ENCODE measurements at regions of chr11 and their contacts with region 1.

Region 1: GRCh38 chr11:5992604-5993251 is 5.9 kb upstream of the OR52L1 start:
- DNase-seq: no peak
- H3K4me3 ChIP-seq: no peak overlapping the region
- H3K27ac ChIP-seq: no peak overlapping the region
- H3K4me1 ChIP-seq: no peaks in the 10 kb centered on the region
- H3K27me3 ChIP-seq: no peaks in the 10 kb centered on the region
- CTCF ChIP-seq: peak in 2 of 3 experiments; percentile 55 to 74; a peak in 3 of 4 replicates
- EP300 ChIP-seq: no peak
- POLR2A ChIP-seq: no peak
- RAD21 ChIP-seq: peak; percentile 55 to 63

Region 2: GRCh38 chr11:5955586-5955985 is 37.1 kb before region 1 on chr11:
- CTCF ChIA-PET with region 1: no interaction called
- POLR2A ChIA-PET with region 1: no interaction called
- DNase-seq: no peak
- H3K4me3 ChIP-seq: no peak overlapping the region
- H3K27ac ChIP-seq: no peak overlapping the region
- H3K4me1 ChIP-seq: no peaks in the 10 kb centered on the region
- H3K27me3 ChIP-seq: no peaks in the 10 kb centered on the region
- CTCF ChIP-seq: no peak
- EP300 ChIP-seq: no peak
- POLR2A ChIP-seq: no peak
- RAD21 ChIP-seq: no peak

Region 3: GRCh38 chr11:6006395-6006794 is 13.7 kb after region 1 on chr11:
- CTCF ChIA-PET with region 1: interaction called, 20 read pairs
- POLR2A ChIA-PET with region 1: no interaction called
- DNase-seq: no peak
- H3K4me3 ChIP-seq: no peak overlapping the region
- H3K27ac ChIP-seq: no peak overlapping the region
- H3K4me1 ChIP-seq: no peaks in the 10 kb centered on the region
- H3K27me3 ChIP-seq: no peaks in the 10 kb centered on the region
- CTCF ChIP-seq: no peak
- EP300 ChIP-seq: no peak
- POLR2A ChIP-seq: no peak
- RAD21 ChIP-seq: no peak

Region 4: GRCh38 chr11:6012035-6012668 is 19.4 kb after region 1 on chr11:
- CTCF ChIA-PET with region 1: interaction called, 20 read pairs
- POLR2A ChIA-PET with region 1: no interaction called
- DNase-seq: no peak
- H3K4me3 ChIP-seq: no peak overlapping the region
- H3K27ac ChIP-seq: no peak overlapping the region
- H3K4me1 ChIP-seq: no peaks in the 10 kb centered on the region; a peak in 1 of 7 replicates
- H3K27me3 ChIP-seq: no peaks in the 10 kb centered on the region
- CTCF ChIP-seq: no peak
- EP300 ChIP-seq: no peak
- POLR2A ChIP-seq: no peak
- RAD21 ChIP-seq: no peak